Caco-2 (cell line): ENCODE measurements at regions of chr1 and their contacts with region 1.

Region 1: GRCh38 chr1:172449585-172450534 is 6.0 kb upstream of the PIGC start:
- DNase-seq: peak; percentile 82 to 83
- H3K4me3 ChIP-seq: peak overlapping the region; percentile 9
- H3K4me3 Mint-ChIP-seq: peak overlapping the region; percentile 68
- H3K27ac Mint-ChIP-seq: peak overlapping the region; percentile 88
- H3K4me1 ChIP-seq: peaks cover 70% of the 10 kb centered on the region
- H3K4me1 Mint-ChIP-seq: peaks cover 63% of the 10 kb centered on the region
- H3K27me3 ChIP-seq: no peaks in the 10 kb centered on the region
- H3K27me3 Mint-ChIP-seq: no peaks in the 10 kb centered on the region
- CTCF ChIP-seq: peak; percentile 90 to 96

Region 2: GRCh38 chr1:172203135-172203823 is 246.6 kb before region 1 on chr1:
- CTCF ChIA-PET with region 1: no interaction called
- POLR2A ChIA-PET with region 1: no interaction called
- intact Hi-C with region 1: no loop called
- DNase-seq: no peak
- H3K4me3 ChIP-seq: no peak overlapping the region
- H3K4me3 Mint-ChIP-seq: no peak overlapping the region
- H3K27ac Mint-ChIP-seq: no peak overlapping the region
- H3K4me1 ChIP-seq: no peaks in the 10 kb centered on the region
- H3K4me1 Mint-ChIP-seq: no peaks in the 10 kb centered on the region
- H3K27me3 ChIP-seq: no peaks in the 10 kb centered on the region; the same call in 1 of the 2 replicates
- H3K27me3 Mint-ChIP-seq: no peaks in the 10 kb centered on the region
- CTCF ChIP-seq: no peak

Region 3: DNA sequence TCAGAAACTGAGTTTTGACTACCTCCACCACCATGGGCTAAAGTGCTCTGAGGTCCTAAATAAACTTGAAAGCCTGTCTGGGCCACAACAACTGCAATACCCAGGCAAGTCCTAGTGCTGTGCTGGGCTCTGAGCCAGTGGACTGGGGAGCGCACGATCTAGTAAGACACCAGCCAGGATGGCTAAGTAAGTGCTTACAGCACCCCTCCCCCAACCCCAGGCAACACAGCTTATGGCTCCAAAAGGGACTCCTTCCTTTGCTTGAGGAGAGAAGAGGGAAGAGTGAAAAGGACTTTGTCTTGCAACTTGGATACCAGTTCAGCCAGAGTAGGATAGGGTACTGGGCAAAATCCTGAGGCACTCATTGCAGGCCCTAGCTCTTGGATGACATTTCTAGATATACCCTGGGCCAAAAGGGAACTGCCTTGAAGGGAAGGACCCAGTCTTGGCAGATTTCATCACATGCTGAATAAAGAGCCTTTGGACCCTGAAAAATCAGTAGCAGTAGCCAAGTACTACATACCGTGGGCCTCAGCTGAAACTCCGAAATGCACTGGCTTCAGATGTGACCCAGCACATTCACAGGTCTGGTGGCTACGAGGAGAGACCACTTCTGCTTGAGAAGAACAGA is 27.8 kb before region 1 on chr1:
- CTCF ChIA-PET with region 1: no interaction called
- POLR2A ChIA-PET with region 1: no interaction called
- intact Hi-C with region 1: no loop called
- DNase-seq: no peak
- H3K4me3 ChIP-seq: no peak overlapping the region
- H3K4me3 Mint-ChIP-seq: no peak overlapping the region
- H3K27ac Mint-ChIP-seq: no peak overlapping the region
- H3K4me1 ChIP-seq: peaks cover 8% of the 10 kb centered on the region; the same call in 1 of the 2 replicates
- H3K4me1 Mint-ChIP-seq: peaks cover 8% of the 10 kb centered on the region
- H3K27me3 ChIP-seq: no peaks in the 10 kb centered on the region
- H3K27me3 Mint-ChIP-seq: no peaks in the 10 kb centered on the region
- CTCF ChIP-seq: no peak

Region 4: DNA sequence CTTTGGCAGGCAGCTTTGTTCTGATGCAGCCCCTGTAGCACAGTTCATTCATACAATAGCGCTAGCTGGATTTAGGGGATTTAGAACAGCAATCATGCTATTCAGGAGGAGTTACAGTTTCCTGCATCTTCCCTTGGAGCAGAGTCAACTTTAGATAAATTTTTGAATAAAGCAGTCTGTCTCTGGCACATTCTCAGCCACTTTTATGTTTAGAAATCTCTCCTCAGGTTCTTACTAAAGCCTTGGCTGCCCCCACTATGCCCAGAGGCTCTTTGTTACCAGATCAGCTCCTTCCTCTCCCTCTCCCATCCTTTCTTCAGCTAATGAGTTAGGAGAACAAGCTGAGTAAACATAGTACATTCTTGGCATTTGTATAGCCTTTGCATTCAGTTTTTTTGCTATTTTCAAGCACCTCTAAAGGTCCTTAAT is 11.0 kb after region 1 on chr1:
- CTCF ChIA-PET with region 1: interaction called, 5 read pairs
- POLR2A ChIA-PET with region 1: interaction called, 7 read pairs
- intact Hi-C with region 1: loop called (anchors 1 kb)
- DNase-seq: no peak
- H3K4me3 ChIP-seq: no peak overlapping the region
- H3K4me3 Mint-ChIP-seq: no peak overlapping the region
- H3K27ac Mint-ChIP-seq: no peak overlapping the region
- H3K4me1 ChIP-seq: peaks cover 41% of the 10 kb centered on the region
- H3K4me1 Mint-ChIP-seq: peaks cover 41% of the 10 kb centered on the region
- H3K27me3 ChIP-seq: no peaks in the 10 kb centered on the region
- H3K27me3 Mint-ChIP-seq: no peaks in the 10 kb centered on the region
- CTCF ChIP-seq: no peak

Region 5: GRCh38 chr1:172499636-172500141 is 49.8 kb after region 1 on chr1:
- CTCF ChIA-PET with region 1: no interaction called
- POLR2A ChIA-PET with region 1: no interaction called
- intact Hi-C with region 1: loop called (anchors 1 kb)
- DNase-seq: peak; percentile 69 to 86
- H3K4me3 ChIP-seq: no peak overlapping the region
- H3K4me3 Mint-ChIP-seq: no peak overlapping the region
- H3K27ac Mint-ChIP-seq: peak overlapping the region; percentile 33
- H3K4me1 ChIP-seq: peaks cover 44% of the 10 kb centered on the region
- H3K4me1 Mint-ChIP-seq: peaks cover 22% of the 10 kb centered on the region
- H3K27me3 ChIP-seq: no peaks in the 10 kb centered on the region
- H3K27me3 Mint-ChIP-seq: no peaks in the 10 kb centered on the region
- CTCF ChIP-seq: no peak

Region 6: DNA sequence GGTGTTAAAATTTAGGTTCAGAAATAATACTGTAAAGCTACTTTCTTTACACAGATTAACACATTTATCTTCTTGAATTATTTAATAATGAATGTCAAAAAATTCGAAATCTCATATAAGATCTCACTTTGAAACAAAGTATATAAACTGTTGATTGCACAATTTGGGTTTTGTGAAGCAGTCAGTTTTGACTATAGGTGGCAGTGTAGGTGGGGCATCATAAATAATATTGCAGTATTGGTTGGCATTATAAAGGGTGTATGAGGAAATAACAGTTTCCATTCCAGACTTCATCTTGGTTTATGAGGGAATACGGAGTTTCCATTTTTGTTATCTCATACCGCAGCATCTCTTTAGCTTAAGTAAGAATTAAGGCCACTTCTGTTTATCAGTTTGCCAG is 133.0 kb after region 1 on chr1:
- CTCF ChIA-PET with region 1: no interaction called
- POLR2A ChIA-PET with region 1: no interaction called
- intact Hi-C with region 1: loop called (anchors 1 kb)
- DNase-seq: no peak
- H3K4me3 ChIP-seq: no peak overlapping the region
- H3K4me3 Mint-ChIP-seq: no peak overlapping the region
- H3K27ac Mint-ChIP-seq: no peak overlapping the region
- H3K4me1 ChIP-seq: peaks cover 35% of the 10 kb centered on the region
- H3K4me1 Mint-ChIP-seq: peaks cover 27% of the 10 kb centered on the region
- H3K27me3 ChIP-seq: no peaks in the 10 kb centered on the region
- H3K27me3 Mint-ChIP-seq: no peaks in the 10 kb centered on the region
- CTCF ChIP-seq: no peak

Region 7: DNA sequence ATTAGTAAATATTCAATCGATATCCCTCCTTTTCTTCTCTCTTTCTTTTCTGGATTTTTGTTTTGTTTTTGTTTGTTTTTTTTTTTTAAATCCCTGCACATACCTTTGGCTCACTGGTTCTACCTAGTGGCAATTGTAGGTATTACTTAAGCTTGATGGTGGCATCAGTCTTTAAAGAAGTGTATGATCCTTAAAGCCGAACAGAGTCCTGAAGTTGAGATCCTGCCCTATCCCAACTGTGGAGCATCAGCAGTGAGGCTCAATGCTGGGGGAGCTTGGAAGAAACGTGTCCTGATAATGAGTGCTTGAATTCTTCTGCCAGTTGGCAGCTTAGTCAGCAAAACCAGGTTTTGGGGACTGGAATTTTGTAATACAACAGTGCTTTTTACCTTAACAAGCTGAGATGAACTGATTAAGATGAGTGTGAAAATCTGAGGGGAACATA is 269.9 kb after region 1 on chr1:
- CTCF ChIA-PET with region 1: interaction called, 9 read pairs
- POLR2A ChIA-PET with region 1: no interaction called
- intact Hi-C with region 1: loop called (anchors 1 kb)
- DNase-seq: peak in 1 of 2 experiments; percentile 60
- H3K4me3 ChIP-seq: no peak overlapping the region
- H3K4me3 Mint-ChIP-seq: no peak overlapping the region
- H3K27ac Mint-ChIP-seq: no peak overlapping the region
- H3K4me1 ChIP-seq: peaks cover 7% of the 10 kb centered on the region; the same call in 1 of the 2 replicates
- H3K4me1 Mint-ChIP-seq: peaks cover 20% of the 10 kb centered on the region
- H3K27me3 ChIP-seq: no peaks in the 10 kb centered on the region
- H3K27me3 Mint-ChIP-seq: no peaks in the 10 kb centered on the region
- CTCF ChIP-seq: peak; percentile 74 to 77